ENCODE measurements at regions of chr9 and their contacts with region 1.

Region 1: DNA sequence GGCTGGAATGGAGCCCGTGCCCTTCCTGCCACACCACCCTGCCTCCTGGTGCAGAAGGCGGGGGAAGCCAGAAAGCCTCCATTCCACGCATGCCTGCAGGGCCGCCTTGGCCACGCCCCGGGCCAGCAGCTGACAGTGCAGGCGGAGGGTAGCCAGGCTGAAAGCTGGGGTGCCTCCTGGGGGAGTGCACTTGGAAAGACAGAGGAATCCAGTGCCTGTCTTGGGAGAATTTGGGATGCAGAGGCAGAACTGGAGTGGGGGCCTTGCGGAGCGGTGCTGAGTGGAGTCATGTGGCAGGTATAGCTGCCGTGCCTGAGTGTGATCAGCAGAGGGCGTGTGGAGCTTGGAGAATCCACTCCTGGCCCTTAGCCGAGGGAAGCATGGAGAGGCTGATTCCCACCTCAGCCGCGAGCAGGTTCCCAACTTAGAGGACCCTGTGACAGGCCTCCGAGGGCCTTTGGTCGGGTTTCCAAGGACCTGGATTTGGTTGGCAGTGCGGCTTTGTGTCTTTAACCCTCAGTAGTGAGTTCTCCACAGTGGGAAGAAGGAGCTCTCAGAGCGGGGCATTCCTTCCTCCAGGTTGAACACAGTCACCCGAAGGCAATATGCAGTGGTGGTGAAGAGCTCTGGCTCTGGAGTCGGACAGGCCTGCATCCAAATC is 9.1 kb upstream of the URM1 start:
- DNase-seq: peak; percentile 36
- H3K4me3 ChIP-seq: peak overlapping the region; percentile 58
- CTCF ChIP-seq: peak; percentile 90

Region 2: DNA sequence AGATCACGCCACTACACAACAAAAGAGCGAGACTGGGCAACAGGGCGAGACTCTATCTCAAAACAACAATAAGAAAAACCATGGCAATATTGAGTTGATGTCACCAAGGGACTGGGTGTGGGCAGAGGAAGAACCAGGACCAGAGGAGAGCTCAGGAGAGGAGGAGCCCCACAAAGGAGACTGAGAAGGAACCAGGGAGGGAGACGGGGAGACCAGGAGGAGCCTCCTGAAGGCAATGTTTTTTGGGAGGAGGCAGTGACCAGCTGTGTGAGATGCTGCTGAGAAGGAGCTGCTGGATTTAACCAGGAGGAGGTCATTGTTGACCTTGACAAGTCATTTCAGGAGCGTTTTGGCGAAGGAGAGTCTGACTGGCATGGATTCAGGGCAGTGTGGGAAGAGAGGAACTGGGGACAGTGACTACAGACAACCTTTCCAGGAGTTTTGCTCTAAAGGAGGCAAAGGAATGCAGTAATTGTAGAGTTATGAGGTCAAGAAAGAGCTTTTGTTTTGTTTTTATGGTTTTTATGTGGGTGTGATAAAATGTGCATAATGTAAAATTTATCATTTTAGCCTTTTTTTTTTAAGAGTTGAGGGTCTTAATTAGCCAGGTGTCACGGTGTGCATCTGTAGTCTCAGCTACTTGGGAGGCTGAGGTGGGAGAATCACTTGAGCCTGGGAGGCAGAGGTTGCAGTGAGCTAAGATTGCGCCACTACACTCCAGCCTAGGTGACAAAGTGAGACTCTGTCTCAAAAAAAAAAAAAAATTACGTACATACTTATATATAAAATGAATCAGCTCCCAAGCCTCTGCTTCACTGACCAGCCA is 57.8 kb before region 1 on chr9:
- CTCF ChIA-PET with region 1: interaction called, 36 read pairs
- POLR2A ChIA-PET with region 1: no interaction called
- DNase-seq: no peak
- H3K4me3 ChIP-seq: no peak overlapping the region
- CTCF ChIP-seq: no peak

Region 3: DNA sequence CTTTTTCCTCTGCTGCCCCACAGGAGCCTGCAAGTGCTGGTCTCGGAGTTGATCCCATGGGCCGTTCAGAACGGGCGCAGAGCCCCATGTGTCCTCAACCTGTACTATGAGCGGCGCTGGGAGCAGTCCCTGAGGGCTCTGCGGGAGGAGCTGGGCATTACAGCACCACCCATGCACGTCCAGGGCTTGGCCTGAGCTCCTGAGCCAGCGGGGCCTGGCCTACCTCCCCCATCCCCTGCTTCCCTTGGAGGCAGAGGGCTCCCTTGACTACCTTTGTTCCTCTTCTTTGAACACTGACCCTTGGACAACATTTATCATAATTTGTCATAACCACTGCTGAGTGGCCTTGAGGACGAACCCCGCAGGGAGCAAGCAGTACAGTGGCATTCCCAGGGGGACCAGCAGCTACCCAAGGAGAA is 28.7 kb before region 1 on chr9:
- CTCF ChIA-PET with region 1: interaction called, 11 read pairs
- POLR2A ChIA-PET with region 1: no interaction called
- DNase-seq: no peak
- H3K4me3 ChIP-seq: no peak overlapping the region
- CTCF ChIP-seq: no peak

Region 4: DNA sequence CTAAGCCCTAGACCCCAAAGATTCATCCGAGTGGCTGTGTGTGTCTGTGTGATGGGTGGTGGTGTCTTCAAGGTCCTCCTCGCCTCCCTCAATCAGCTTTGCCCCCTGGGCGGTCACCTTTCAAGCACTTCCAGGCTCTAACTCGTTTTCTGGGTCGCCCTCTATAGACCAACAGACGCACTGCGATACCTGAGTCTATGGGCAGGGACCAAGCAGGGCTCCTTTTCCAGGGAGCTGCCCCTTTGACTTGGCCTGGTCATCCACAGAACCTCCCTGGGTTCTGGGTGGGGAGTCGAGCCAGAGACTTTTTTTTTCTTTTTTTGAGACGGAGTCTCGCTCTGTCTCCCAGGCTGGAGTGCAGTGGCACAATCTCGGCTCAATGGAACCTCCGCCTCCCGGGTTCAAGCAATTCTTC is 20.7 kb before region 1 on chr9:
- CTCF ChIA-PET with region 1: interaction called, 36 read pairs
- POLR2A ChIA-PET with region 1: interaction called, 3 read pairs
- DNase-seq: no peak
- H3K4me3 ChIP-seq: peak overlapping the region; percentile 82
- CTCF ChIP-seq: peak; percentile 79

Region 5: DNA sequence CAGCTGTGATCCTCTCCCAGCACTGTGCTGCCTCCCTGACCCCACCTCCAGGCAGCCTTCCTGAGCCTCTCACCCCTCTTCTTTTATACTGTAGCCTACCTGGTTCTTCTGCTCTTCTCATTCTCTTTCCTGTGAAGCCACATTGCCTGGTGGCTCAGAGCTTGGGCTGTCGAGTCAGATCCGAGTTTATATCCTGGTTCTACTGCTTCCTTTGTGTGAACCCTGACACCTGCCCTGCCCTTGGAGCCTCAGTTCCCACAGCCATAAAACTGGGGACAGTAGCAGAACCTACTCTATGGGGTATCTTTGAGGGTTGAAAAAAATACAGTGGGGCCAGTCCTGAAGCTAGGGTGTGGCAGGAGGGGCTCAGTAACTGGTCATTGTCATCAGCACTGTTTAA is 13.0 kb before region 1 on chr9:
- CTCF ChIA-PET with region 1: interaction called, 36 read pairs
- POLR2A ChIA-PET with region 1: interaction called, 3 read pairs
- DNase-seq: no peak
- H3K4me3 ChIP-seq: no peak overlapping the region
- CTCF ChIP-seq: no peak

Region 6: DNA sequence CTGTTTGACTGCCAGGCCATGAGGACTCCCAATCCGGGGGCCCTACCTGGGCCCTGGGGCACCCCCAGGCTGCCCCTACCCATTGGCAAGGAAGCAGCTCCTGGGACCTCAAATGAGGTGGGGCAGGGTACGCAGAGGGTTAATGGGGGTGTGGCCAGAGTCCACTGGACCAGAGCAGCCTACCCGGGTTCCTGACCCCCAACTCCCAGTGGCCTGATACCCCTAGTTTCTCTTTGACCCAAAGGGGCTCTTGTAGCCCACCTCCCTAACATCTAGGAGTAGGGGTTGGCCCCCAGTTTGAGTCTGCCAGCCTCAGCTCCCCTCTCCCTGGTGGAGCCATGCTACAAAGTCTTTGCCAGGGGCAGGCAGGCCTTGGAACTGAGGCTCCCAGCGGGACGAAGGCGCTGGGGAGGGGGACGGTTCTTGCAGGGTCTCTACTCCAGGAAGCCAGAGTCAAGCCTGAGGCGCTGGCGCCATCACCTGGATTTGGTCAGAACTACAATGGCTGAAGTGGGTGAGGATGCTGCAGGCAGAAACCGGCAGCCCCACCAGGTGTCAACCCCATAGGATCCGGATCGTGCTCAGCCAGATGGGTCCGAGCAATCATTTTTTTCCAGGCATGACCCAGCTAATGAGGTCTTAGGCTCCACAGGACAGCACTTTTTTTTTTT is 50.1 kb after region 1 on chr9:
- CTCF ChIA-PET with region 1: interaction called, 80 read pairs
- POLR2A ChIA-PET with region 1: no interaction called
- DNase-seq: no peak
- H3K4me3 ChIP-seq: no peak overlapping the region
- CTCF ChIP-seq: peak; percentile 63

Region 7: DNA sequence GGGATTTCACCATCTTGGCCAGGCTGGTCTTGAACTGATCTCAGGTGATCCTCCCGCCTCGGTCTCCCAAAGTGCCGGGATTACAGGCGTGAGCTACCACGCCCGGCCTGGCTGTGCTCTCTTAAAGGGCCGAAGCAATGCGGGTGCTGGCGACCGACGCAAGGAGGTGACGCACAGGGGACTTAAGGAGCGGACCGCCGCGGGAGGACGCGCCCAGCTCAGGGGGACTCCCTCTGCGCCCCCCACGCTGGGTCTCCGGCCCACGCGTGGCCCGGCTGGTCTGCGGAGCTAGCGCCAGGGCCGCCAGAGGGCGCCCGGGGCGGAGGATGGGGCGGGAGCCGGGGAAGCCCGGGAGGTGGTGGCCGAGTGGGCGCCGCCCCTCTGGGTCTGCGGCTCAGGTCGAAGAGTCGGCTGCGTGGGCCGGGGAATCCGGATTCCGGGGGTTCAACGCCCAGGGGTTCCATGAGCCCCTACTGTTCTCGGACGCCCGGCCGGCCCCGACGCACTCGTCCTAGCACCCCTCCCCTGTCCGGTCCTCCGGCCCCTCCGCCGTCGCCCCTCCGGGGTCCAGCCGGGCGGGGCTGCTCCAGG is 58.0 kb after region 1 on chr9:
- CTCF ChIA-PET with region 1: interaction called, 70 read pairs
- POLR2A ChIA-PET with region 1: interaction called, 15 read pairs
- DNase-seq: no peak
- H3K4me3 ChIP-seq: peak overlapping the region; percentile 82
- CTCF ChIP-seq: peak; percentile 85